Endothelial cell of umbilical vein (primary cell): ENCODE measurements at regions of chr14 and their contacts with region 1.

Region 1: DNA sequence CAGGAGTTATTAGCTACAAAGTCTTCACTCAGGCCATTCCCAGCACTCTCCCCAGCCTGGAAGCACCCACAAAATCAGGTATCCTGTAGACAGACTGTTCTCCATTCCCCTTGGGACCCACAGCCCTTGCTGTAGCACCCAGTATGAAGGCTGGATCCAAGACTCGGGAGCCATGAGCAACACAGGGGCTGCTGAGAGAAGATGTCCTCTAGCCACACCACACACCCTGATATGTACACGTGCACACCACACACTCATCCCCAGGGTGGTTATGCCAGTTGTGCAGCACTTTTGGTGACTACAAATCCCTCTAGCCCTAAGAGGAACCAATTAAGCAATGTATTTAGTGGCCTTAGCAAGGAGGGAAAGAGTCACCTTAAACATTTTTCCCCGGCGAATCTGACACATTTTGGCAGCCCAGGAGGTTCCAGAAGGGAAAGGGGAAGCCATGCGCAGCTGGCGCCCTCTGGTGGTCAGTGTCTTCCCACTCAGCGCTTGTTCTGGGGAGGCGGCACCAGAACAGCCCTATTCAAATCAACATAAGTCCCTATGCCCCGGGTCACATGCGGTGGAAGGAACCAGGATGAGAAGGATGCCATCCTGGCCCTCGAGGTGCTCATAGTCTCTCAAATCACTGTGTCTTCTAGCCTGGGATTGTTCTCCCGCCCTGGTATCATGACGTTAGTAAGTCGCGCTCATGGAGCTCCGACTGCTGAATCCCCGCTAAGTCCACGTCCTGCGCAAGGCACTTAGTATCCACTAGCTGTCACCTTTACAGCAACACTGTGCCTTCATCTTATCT is 96.9 kb downstream of the GCH1 start:
- DNase-seq: peak; percentile 81
- H3K4me3 ChIP-seq: no peak overlapping the region
- H3K27ac ChIP-seq: no peak overlapping the region
- H3K4me1 ChIP-seq: no peaks in the 10 kb centered on the region
- H3K27me3 ChIP-seq: peaks cover 0 to 2% of the 10 kb centered on the region in 2 experiments
- CTCF ChIP-seq: peak; percentile 90 to 95
- POLR2A ChIP-seq: no peak

Region 2: GRCh38 chr14:54366736-54367735 is 438.7 kb before region 1 on chr14:
- CTCF ChIA-PET with region 1: interaction called, 5 read pairs
- POLR2A ChIA-PET with region 1: no interaction called
- dilution Hi-C with region 1: no loop called
- intact Hi-C with region 1: loop called (anchors 1 kb)
- DNase-seq: peak; percentile 69
- H3K4me3 ChIP-seq: no peak overlapping the region
- H3K27ac ChIP-seq: no peak overlapping the region
- H3K4me1 ChIP-seq: peaks cover 38% of the 10 kb centered on the region
- H3K27me3 ChIP-seq: peaks cover 0 to 1% of the 10 kb centered on the region in 2 experiments
- CTCF ChIP-seq: peak; percentile 59 to 67
- POLR2A ChIP-seq: no peak

Region 3: DNA sequence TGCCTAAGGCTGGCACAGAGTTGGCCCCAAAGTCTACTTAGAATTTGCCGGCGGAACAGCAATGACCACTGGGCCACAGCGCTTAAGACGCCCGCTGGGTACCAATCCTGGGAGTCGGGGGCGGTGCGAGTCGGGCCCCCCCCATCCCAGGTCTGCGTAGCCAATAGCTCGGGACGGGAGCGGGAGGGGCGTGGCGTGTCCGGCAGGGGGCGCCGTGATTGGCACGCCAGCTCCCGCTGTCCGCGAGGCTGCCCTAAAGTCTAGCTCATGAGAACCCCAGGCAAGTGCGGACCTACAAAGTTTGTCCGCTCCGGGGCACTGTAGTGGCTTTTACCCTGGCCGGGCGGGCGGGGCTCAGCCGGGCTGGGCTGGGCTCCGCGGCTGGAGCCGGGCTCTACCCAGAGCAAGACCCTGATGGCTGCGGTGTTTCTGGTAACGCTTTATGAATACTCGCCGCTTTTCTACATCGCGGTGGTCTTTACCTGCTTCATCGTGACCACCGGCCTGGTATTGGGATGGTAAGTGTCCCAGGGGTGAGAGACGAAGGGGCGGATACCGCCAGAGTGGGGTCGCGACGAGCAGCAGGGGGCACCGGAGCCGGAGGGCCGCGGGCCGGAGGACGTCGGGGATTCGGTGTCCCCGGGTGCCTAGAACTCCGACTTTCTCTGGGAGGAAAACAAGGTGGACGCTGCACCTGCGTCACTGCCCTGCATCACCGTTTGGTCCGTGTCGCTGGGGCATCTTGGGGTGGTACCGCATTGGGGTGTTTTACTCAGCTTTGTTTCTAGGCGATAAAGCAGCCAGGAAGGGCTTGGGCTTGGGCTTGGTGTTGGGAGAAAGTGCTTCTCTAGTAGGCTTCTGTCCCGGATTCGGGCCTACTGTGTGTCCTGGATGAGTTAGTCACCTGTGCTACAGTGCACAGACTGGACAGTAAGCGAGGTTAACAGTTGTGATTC is 295.9 kb before region 1 on chr14 and contains the start of gene CGRRF1:
- CTCF ChIA-PET with region 1: interaction called, 13 read pairs
- POLR2A ChIA-PET with region 1: no interaction called
- dilution Hi-C with region 1: no loop called
- intact Hi-C with region 1: loop called (anchors 5 kb)
- DNase-seq: peak; percentile 99
- H3K4me3 ChIP-seq: peak within 1 kb of the TSS; percentile 20 to 92 (median 91)
- H3K27ac ChIP-seq: peak within 1 kb of the TSS; percentile 10
- H3K4me1 ChIP-seq: peaks cover 9% of the 10 kb centered on the region
- H3K27me3 ChIP-seq: no peaks in the 10 kb centered on the region
- CTCF ChIP-seq: peak; percentile 18 to 65
- POLR2A ChIP-seq: peak; percentile 88
- total RNA-seq, gene CGRRF1: 15.7 and 15.8 TPM in 2 replicates

Region 4: DNA sequence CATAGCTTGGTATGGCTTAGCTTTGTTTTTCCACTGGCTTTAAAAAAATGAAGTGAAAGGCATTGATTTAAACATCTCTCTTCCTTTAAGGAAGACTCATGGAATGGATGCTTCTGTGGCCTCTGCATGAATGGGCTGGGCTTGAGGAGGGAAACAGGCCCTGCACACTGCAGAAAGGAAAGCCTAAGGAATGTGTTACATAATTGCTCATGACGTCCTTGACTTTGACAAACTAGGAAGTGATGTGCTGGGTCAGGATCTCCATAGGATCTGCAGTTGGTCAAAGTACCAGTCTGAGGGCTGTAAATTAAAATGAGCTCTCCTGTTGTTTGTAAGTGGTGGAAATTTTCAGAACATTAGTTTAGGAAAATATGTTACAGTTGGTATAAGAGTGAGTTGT is 226.1 kb before region 1 on chr14:
- CTCF ChIA-PET with region 1: no interaction called
- POLR2A ChIA-PET with region 1: no interaction called
- dilution Hi-C with region 1: no loop called
- intact Hi-C with region 1: no loop called
- DNase-seq: peak; percentile 50
- H3K4me3 ChIP-seq: no peak overlapping the region
- H3K27ac ChIP-seq: no peak overlapping the region
- H3K4me1 ChIP-seq: peaks cover 18% of the 10 kb centered on the region
- H3K27me3 ChIP-seq: no peaks in the 10 kb centered on the region
- CTCF ChIP-seq: no peak
- POLR2A ChIP-seq: no peak

Region 5: GRCh38 chr14:54642801-54643697 is 162.7 kb before region 1 on chr14:
- CTCF ChIA-PET with region 1: no interaction called
- POLR2A ChIA-PET with region 1: no interaction called
- dilution Hi-C with region 1: no loop called
- intact Hi-C with region 1: no loop called
- DNase-seq: no peak
- H3K4me3 ChIP-seq: no peak overlapping the region
- H3K27ac ChIP-seq: no peak overlapping the region
- H3K4me1 ChIP-seq: peaks cover 4% of the 10 kb centered on the region
- H3K27me3 ChIP-seq: no peaks in the 10 kb centered on the region
- CTCF ChIP-seq: peak in 1 of 2 donors; percentile 26
- POLR2A ChIP-seq: no peak

Region 6: DNA sequence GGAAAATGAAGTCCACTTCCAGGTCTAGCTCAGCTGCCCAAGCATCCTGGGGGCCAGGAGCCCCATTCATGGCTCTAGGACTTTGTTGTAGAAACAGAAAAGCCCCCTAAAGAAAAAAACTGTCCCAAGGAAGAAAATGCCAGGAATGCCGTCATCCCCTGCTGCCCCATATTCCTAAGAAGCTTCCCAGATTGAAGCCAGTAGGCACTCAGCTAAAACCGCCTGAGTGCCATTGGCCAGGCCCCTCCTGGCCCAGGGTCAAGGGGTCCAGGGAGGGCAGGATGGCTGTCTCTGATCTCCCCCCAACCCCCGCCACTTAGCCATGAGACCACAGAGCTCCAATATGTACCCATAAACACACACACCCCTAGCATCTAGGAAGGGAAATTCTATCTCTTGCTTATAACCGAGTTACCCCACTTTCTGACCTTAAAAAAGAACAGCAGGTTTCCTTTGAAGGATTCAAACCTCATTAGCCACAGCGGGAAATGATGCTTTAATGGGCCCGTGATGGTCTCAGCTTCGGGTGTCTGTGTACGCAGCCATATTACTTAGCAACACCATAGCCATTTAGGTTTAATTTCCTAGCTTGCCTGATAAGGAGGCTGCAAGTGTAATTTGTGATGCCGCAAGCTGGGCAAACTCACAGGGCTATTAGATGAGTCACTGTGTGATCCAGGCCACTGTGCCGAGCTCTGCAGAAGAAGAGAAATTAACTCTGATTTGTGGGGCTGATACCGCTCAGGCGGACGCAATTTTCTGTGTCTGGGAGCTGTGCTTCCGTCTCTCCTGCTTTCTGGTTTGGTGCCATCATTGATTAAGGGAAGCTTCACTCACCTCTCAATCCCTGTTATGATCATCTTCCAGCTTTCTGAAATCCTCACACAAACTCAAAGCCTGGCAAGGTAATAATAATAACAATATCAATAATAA is 12.7 kb after region 1 on chr14:
- CTCF ChIA-PET with region 1: interaction called, 50 read pairs
- POLR2A ChIA-PET with region 1: no interaction called
- dilution Hi-C with region 1: no loop called
- intact Hi-C with region 1: no loop called
- DNase-seq: peak; percentile 20
- H3K4me3 ChIP-seq: no peak overlapping the region
- H3K27ac ChIP-seq: no peak overlapping the region
- H3K4me1 ChIP-seq: no peaks in the 10 kb centered on the region
- H3K27me3 ChIP-seq: peaks cover 2 to 9% of the 10 kb centered on the region in 2 experiments
- CTCF ChIP-seq: no peak
- POLR2A ChIP-seq: no peak

Region 7: DNA sequence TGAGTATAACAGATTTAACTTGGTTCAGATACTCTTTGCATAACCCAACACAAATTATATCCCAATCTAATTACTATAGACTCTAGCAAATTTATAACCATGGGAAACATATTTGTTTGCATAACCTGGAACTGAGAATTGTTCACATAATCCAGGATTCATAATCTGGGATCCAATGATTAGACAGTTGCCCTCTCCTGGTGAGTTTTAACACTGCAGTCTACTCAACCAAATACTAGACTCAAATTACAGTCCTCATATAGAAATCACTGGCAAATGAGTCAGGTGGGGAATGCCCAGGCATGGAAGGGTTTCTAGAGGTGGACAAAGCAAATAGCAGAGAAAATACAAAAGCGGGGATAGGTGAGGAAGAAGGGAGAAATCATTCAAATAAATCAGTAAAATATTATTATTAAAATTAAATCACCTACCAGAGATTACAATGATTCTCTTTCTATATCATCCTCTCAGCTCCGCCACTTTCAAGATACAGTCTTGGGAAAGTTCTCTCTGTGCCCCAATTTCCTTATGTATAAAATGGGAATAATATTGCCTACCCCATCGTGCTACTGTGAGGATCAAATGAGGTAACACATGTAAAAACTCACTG is 87.5 kb after region 1 on chr14:
- CTCF ChIA-PET with region 1: interaction called, 5 read pairs
- POLR2A ChIA-PET with region 1: no interaction called
- dilution Hi-C with region 1: no loop called
- intact Hi-C with region 1: loop called (anchors 1 kb)
- DNase-seq: peak; percentile 77
- H3K4me3 ChIP-seq: no peak overlapping the region
- H3K27ac ChIP-seq: no peak overlapping the region
- H3K4me1 ChIP-seq: peaks cover 6% of the 10 kb centered on the region
- H3K27me3 ChIP-seq: no peaks in the 10 kb centered on the region
- CTCF ChIP-seq: peak; percentile 58 to 61
- POLR2A ChIP-seq: no peak